CD14-positive monocyte (primary cell): ENCODE measurements at regions of chr6 and their contacts with region 1.

Region 1: DNA sequence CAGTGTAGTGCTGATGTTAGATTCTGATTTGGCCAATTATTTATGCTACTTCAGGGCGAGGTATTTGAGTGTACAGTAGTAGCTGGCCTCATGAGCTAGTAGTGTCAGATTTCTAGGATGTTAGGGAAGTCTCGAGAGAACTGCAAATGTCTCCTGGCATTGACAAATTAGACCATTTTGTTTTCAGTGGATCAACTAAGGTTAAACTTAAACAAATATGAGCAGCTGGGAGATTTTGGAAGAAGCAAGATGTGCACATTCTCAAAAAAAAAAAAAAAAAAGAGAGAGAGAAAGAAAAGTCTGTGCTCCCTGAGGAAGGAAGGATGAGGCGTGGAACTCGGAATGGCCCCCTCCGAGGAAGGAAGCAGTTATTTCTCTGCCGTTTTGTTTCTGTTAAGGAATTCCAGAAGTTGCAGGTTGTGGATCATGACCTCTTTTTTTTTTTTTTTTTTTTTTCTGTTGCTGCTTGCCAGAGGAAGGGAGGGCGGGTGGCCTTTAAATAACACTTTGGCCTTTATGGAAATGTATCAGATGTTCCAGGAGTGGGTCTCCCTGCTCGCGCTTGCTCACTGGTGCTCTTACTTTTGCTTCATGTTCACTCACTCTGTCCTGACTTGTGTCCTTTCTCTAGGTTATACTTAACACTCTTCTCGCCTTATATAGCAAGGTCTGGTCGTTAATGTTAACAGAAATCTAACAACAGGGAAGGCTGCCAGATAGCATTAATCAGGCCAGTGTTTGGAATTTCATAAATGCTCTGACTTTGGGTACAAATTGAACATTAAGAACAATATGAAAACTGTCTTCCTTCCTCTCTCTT is 124.4 kb downstream of the TCP11 start:
- DNase-seq: no peak
- H3K4me3 ChIP-seq: no peak overlapping the region
- H3K4me3 Mint-ChIP-seq: no peak overlapping the region
- H3K27ac ChIP-seq: no peak overlapping the region
- H3K27ac Mint-ChIP-seq: peak overlapping the region in 2 of 7 donors; percentile 16 to 68
- H3K4me1 ChIP-seq: peaks cover 5 to 14% of the 10 kb centered on the region in 2 donors
- H3K4me1 Mint-ChIP-seq: peaks cover 18% of the 10 kb centered on the region
- H3K27me3 ChIP-seq: no peaks in the 10 kb centered on the region
- H3K27me3 Mint-ChIP-seq: peaks cover 0 to 2% (median 0%) of the 10 kb centered on the region in 3 donors
- CTCF ChIP-seq: no peak

Region 2: GRCh38 chr6:35064757-35065440 is 48.2 kb after region 1 on chr6:
- intact Hi-C with region 1: loop called in 1 of 2 experiments (anchors 5 kb)
- DNase-seq: no peak
- H3K4me3 ChIP-seq: no peak overlapping the region
- H3K4me3 Mint-ChIP-seq: no peak overlapping the region
- H3K27ac ChIP-seq: no peak overlapping the region
- H3K27ac Mint-ChIP-seq: peak overlapping the region in 2 of 7 donors; percentile 42 to 49
- H3K4me1 ChIP-seq: no peaks in the 10 kb centered on the region
- H3K4me1 Mint-ChIP-seq: no peaks in the 10 kb centered on the region
- H3K27me3 ChIP-seq: no peaks in the 10 kb centered on the region
- H3K27me3 Mint-ChIP-seq: no peaks in the 10 kb centered on the region
- CTCF ChIP-seq: no peak